Colonic mucosa (tissue), 4 donors: ENCODE measurements at regions of chr13 and their contacts with region 1.

Region 1: GRCh38 chr13:108322206-108322824 is 52.8 kb downstream of the TNFSF13B start:
- DNase-seq: no peak
- H3K4me3 ChIP-seq: no peak overlapping the region
- H3K27ac ChIP-seq: no peak overlapping the region
- H3K4me1 ChIP-seq: no peaks in the 10 kb centered on the region
- H3K27me3 ChIP-seq: no peaks in the 10 kb centered on the region
- CTCF ChIP-seq: peak; percentile 75

Region 2: GRCh38 chr13:108508263-108508662 is 185.9 kb after region 1 on chr13:
- intact Hi-C with region 1: loop called (anchors 5 kb)
- DNase-seq: no peak
- H3K4me3 ChIP-seq: no peak overlapping the region
- H3K27ac ChIP-seq: no peak overlapping the region
- H3K4me1 ChIP-seq: no peaks in the 10 kb centered on the region
- H3K27me3 ChIP-seq: no peaks in the 10 kb centered on the region
- CTCF ChIP-seq: peak; percentile 18

Region 3: GRCh38 chr13:108711361-108711760 is 389.0 kb after region 1 on chr13:
- intact Hi-C with region 1: no loop called
- DNase-seq: no peak
- H3K4me3 ChIP-seq: no peak overlapping the region
- H3K27ac ChIP-seq: no peak overlapping the region
- H3K4me1 ChIP-seq: no peaks in the 10 kb centered on the region
- H3K27me3 ChIP-seq: no peaks in the 10 kb centered on the region
- CTCF ChIP-seq: no peak